ENCODE measurements at regions of chr19 and their contacts with region 1.

Region 1: DNA sequence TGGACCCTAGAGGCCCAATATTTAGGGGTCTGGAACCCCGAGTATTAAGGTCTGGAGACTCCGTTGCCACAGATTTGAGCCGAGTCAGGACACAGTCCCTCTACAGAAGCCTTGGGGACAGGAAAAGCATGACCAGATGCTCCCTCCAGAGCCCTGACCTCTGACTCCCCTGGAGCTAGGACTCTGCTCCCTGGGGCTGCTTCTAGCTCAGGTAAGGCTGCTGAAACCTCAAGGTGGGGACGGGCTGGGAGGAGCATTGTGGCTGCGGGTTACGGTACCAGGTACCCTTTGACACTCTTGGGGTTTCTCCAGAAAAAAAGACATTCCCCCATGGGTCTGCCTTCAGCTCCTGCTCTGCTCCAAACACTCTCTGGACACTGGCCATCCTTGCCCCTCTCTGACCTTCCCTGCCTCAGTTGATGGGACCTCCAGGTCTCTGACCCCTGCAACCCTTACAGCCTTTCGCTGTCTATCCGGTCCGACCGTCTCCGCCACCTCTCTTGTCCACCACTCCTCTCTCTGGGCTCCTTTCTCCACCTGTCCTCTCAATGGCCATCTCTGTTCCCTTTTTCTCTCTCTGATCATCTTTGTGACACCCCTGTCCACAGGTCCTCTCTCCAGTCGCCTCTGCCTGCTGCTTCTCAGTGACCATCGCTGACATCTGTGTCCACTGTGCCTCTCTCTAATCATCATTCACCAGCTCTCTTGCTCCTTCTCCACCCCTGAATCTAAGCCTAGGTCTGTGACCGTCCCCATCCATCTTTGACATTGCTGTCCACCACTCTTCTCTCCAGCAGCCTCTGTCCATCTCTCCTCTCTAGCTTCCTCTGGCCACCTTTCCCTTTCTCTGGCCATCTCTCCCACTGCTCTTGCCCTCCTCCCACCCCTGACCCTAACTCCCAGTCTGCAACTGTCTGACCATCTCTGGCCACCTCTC is 1.4 kb downstream of the LRFN3 start:
- DNase-seq: no peak
- H3K4me3 ChIP-seq: peak overlapping the region; percentile 88
- H3K27ac ChIP-seq: no peak overlapping the region
- H3K4me1 ChIP-seq: peaks cover 24% of the 10 kb centered on the region
- H3K27me3 ChIP-seq: no peaks in the 10 kb centered on the region
- CTCF ChIP-seq: no peak

Region 2: DNA sequence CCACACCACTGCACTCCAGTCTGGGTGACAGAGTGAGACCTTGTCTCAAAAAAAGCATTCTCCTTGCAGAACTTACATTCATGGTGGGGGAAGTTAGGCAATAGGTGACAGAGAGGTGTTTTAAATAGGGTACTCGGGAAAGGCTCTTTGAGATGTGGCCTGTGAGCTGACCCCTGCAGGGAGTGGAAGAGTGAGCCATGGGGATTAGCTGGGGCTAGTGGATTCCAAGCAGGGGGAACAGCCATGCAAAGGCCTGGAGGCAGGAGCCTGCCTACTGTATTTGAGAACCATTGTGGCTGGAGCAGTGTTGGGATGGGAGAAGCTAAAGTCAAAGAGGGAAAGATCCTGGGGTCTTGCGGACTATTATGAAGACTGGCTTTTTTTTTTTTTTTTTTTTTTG is 420.3 kb before region 1 on chr19:
- CTCF ChIA-PET with region 1: no interaction called
- POLR2A ChIA-PET with region 1: interaction called, 18 read pairs
- intact Hi-C with region 1: no loop called
- DNase-seq: no peak
- H3K4me3 ChIP-seq: no peak overlapping the region
- H3K27ac ChIP-seq: no peak overlapping the region
- H3K4me1 ChIP-seq: peaks cover 12% of the 10 kb centered on the region; the same call in 1 of the 2 replicates
- H3K27me3 ChIP-seq: no peaks in the 10 kb centered on the region
- CTCF ChIP-seq: no peak

Region 3: GRCh38 chr19:35767288-35768081 is 170.1 kb before region 1 on chr19:
- CTCF ChIA-PET with region 1: no interaction called
- POLR2A ChIA-PET with region 1: no interaction called
- intact Hi-C with region 1: no loop called
- DNase-seq: no peak
- H3K4me3 ChIP-seq: no peak overlapping the region
- H3K27ac ChIP-seq: no peak overlapping the region
- H3K4me1 ChIP-seq: no peaks in the 10 kb centered on the region
- H3K27me3 ChIP-seq: no peaks in the 10 kb centered on the region
- CTCF ChIP-seq: no peak

Region 4: GRCh38 chr19:35977446-35978222 is 40.0 kb after region 1 on chr19:
- CTCF ChIA-PET with region 1: no interaction called
- POLR2A ChIA-PET with region 1: interaction called, 17 read pairs
- intact Hi-C with region 1: no loop called
- DNase-seq: no peak
- H3K4me3 ChIP-seq: no peak overlapping the region
- H3K27ac ChIP-seq: no peak overlapping the region
- H3K4me1 ChIP-seq: no peaks in the 10 kb centered on the region
- H3K27me3 ChIP-seq: peaks cover 87% of the 10 kb centered on the region
- CTCF ChIP-seq: no peak; the same call in 1 of the 2 replicates

Measured in PC-9 (cell line).